Activated CD4-positive, alpha-beta memory T cell treated with anti-CD3 and anti-CD28 coated beads for 36 hours (primary cell): ENCODE measurements at regions of chr12 and their contacts with region 1.

Region 1: DNA sequence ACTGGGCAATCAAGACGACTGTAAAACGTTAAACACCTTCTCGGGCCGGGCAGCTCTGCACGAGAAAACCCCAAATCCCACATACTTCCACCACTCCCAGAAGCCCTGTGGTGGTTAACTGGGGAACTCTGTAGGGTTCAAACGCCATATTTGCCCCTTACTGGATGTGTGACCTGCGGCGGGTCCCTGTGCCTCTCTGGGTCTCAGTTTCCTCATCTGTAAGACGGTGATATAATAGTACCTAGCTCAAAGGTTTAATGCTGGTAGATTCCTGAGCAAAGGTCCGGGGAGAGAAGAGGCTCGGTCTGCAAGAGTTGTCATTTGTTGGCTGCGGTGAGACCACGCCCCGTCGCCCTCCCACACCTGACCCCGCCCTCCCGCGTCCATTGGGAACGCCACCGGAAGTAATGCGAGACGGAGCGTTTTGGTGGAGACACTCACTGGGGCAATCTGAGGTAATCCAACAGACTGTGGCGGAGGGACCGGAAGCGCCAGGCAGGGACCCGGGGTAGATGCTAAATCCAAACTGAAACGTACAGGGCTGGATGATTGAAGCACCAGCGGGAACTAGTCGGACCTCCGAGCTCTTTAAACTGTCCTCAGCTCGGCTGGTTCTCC is 661 bp upstream of the OGFOD2 start:
- DNase-seq: peak; percentile 100
- H3K4me3 Mint-ChIP-seq: peak overlapping the region; percentile 98
- H3K27ac Mint-ChIP-seq: peak overlapping the region; percentile 99
- H3K4me1 Mint-ChIP-seq: peaks cover 25% of the 10 kb centered on the region
- H3K27me3 Mint-ChIP-seq: no peaks in the 10 kb centered on the region

Region 2: DNA sequence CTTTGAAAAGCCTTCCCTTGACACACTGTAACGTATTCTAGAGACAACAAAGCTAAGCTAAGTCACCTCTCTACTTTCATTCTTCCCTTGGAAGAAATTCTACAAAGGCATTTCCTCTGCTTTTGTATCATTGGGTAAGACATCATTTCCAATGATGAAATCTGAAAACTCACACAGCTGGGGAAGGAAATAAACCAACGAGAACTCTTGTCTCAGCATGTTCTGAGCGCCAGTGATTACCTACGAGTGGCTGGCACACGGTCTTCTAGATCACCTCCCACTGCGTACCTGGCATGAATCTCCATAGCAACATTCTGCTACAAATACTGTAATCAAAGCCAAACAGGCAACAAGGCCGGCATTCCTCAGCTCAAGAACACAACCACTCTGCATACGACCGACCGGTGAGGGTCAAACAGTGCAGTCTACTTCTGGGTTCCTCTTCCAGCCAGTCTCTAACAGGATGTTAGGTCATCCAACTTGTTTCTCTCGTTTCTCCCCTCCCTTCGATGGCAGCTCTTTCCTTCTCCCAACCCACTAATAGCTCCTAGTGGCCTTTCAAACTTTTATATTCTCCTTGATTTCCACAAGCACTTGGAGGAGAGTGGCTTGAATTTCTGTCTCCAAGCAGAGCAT is 86.0 kb before region 1 on chr12:
- CTCF ChIA-PET with region 1: no interaction called
- POLR2A ChIA-PET with region 1: no interaction called
- intact Hi-C with region 1: loop called (anchors 2 kb)
- DNase-seq: peak; percentile 65
- H3K4me3 Mint-ChIP-seq: peak overlapping the region; percentile 70
- H3K27ac Mint-ChIP-seq: peak overlapping the region; percentile 88
- H3K4me1 Mint-ChIP-seq: peaks cover 77% of the 10 kb centered on the region
- H3K27me3 Mint-ChIP-seq: peaks cover 5% of the 10 kb centered on the region

Region 3: DNA sequence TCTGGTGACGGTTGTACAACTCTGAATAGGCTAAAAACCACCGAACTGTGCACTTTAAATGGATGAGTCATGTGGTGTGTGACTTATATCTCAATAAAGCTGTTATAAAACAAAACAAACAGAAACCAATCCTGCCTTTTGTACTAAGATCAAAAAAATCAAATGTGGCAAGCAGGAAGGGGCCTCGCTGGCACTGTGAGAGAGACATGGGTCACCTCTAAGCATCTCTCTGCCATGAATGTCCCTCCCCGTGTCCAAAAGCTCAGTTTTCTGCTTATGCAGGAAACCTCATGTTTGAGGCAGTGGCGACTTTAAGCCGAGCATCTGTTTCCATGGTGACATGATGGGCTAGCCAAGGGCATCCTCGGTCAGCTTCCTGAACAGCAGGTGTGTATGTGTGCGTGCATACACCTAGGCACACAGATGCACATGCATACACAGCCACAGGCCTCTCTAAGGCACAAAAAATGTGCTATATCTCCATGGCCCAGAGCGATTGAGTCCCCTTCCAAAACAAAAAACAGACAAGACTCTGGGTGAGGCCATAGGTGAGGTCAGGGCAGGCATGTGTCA is 50.5 kb after region 1 on chr12:
- CTCF ChIA-PET with region 1: no interaction called
- POLR2A ChIA-PET with region 1: no interaction called
- intact Hi-C with region 1: loop called (anchors 2 kb)
- DNase-seq: peak; percentile 66
- H3K4me3 Mint-ChIP-seq: no peak overlapping the region
- H3K27ac Mint-ChIP-seq: peak overlapping the region; percentile 80
- H3K4me1 Mint-ChIP-seq: peaks cover 18% of the 10 kb centered on the region
- H3K27me3 Mint-ChIP-seq: no peaks in the 10 kb centered on the region

Region 4: GRCh38 chr12:123601602-123602489 is 627.5 kb after region 1 on chr12 and contains the start of gene DDX55:
- CTCF ChIA-PET with region 1: no interaction called
- POLR2A ChIA-PET with region 1: no interaction called
- intact Hi-C with region 1: loop called (anchors 1 kb)
- DNase-seq: peak; percentile 90
- H3K4me3 Mint-ChIP-seq: peak within 1 kb of the TSS; percentile 84
- H3K27ac Mint-ChIP-seq: peak within 1 kb of the TSS; percentile 90
- H3K4me1 Mint-ChIP-seq: peaks cover 30% of the 10 kb centered on the region
- H3K27me3 Mint-ChIP-seq: no peaks in the 10 kb centered on the region
- total RNA-seq, gene DDX55: 44.0 to 45.1 TPM